Endothelial cell of umbilical vein (primary cell): ENCODE measurements at regions of chr5 and their contacts with region 1.

Region 1: DNA sequence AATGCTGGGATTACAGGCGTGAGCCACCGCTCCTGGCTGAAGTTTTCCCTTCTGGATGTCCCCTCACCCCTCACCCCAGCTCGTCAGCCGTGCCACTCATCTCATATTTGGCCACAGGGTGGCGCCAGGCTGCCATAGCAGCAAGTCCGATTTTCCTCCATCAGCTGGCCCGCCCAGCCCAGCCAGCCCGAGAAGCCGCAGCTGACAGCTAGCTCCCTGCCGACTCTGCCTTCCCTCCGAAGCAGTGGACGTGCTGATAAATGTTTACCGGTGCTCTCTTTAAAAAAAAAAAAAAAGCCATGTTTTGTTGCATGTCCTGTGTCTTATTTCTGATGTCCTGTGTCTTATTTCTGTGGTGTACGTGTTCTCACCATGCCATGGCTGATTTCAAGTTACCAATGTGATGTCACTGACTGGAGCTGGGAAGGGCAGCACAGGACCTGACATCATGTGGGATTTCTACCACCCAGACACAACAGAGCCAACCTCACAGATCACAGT is 58.3 kb downstream of the PFDN1 start:
- DNase-seq: peak; percentile 88
- H3K4me3 ChIP-seq: no peak overlapping the region
- H3K27ac ChIP-seq: peak overlapping the region; percentile 57
- H3K4me1 ChIP-seq: peaks cover 41% of the 10 kb centered on the region
- H3K27me3 ChIP-seq: no peaks in the 10 kb centered on the region
- CTCF ChIP-seq: peak; percentile 72 to 86
- POLR2A ChIP-seq: no peak

Region 2: DNA sequence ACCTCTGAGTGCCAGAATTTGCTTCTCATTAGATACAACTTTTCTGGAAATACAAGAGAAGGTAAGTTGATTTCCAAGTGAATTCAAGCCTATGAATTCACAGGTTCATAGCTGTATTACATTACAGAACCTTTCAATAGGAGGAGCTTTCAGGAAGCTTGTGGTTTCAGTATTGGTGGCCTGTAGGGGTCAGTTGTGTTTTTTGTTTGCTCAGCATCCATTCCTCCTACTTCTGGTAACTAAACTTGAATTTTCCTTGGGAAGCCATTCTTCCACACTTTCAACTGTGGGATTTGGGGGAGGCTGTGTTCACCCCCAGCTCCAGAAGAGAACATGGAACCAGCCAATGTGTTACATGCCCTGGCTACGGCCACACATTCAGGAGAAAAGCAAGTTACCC is 75.2 kb before region 1 on chr5:
- CTCF ChIA-PET with region 1: interaction called, 31 read pairs
- POLR2A ChIA-PET with region 1: no interaction called
- dilution Hi-C with region 1: no loop called
- intact Hi-C with region 1: loop called (anchors 2 kb)
- DNase-seq: peak; percentile 12
- H3K4me3 ChIP-seq: no peak overlapping the region
- H3K27ac ChIP-seq: no peak overlapping the region
- H3K4me1 ChIP-seq: peaks cover under 1% of the 10 kb centered on the region
- H3K27me3 ChIP-seq: peaks cover 0 to 1% of the 10 kb centered on the region in 2 experiments
- CTCF ChIP-seq: no peak
- POLR2A ChIP-seq: no peak

Region 3: DNA sequence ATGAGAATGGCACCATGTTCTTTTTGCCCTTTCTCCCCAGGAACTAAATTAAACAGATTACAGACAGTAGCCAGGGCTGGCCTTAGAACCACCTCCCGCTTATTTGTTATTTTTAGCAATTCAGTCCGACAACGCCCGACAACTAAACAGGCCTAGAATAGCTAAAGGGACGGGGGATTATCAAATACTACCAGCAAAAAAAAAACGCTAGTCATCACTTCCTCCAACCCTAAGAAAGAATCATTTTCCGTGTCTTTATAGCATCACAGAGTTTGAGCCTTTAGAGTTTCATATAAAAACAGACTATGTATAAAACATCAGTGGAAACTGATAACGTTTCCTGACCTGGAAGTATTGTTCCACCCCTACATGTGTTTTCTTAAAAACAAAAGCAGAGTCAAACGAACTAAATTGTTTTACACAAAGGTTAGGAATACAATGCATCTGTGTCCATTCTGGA is 23.0 kb after region 1 on chr5:
- CTCF ChIA-PET with region 1: interaction called, 64 read pairs
- POLR2A ChIA-PET with region 1: interaction called, 7 read pairs
- dilution Hi-C with region 1: no loop called
- intact Hi-C with region 1: loop called (anchors 1 kb)
- DNase-seq: peak; percentile 92
- H3K4me3 ChIP-seq: peak overlapping the region in 1 of 3 experiments; percentile 37
- H3K27ac ChIP-seq: peak overlapping the region; percentile 84
- H3K4me1 ChIP-seq: peaks cover 24% of the 10 kb centered on the region
- H3K27me3 ChIP-seq: no peaks in the 10 kb centered on the region
- CTCF ChIP-seq: no peak
- POLR2A ChIP-seq: no peak

Region 4: DNA sequence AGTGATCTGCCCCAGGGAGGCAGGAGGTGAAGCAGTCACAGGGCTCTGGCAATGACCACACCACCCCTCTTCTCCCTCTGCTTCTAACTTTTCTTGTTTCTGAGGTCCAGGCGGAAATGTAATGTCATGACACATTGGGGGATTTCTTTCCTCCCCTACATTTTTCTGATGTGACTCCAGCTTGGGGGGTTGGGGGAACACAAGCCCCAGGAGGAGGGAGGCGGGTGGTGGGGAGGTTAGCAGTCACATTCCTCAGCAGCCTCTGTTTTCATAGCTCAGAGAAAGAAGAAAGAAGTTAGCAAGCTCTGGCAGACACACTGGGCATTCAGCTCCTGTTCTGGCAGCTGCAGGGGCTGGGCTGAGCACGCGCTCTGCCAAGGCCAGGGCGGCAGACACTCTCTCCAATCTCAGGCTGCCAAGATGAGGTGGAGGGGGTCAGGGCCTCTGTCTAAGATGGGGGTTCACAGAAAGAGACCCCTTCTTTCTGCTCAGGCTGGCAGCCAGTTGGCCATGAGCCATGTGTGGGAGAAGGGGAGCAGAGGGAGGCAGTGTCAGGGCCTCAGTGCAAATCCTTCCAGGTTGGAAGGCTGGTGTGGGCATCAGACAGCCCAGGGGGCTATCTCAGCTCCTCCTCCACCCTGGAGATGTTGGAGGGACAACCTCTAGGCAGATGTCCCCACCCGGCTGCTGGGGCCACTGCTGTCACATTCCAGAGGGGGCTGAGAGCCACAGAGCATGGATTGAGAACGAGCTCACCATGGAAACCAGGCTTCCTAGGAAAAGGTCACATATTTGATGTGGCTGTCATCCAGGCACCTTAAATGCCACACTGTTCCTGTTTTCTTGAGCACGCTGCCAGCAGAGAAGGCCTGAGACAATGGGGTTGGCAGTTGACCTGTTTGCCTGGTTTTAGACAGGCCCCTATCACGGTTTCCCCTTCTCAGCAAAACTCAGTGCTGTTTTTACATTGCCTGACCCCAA is 78.5 kb after region 1 on chr5:
- CTCF ChIA-PET with region 1: interaction called, 22 read pairs
- POLR2A ChIA-PET with region 1: interaction called, 3 read pairs
- dilution Hi-C with region 1: no loop called
- intact Hi-C with region 1: loop called (anchors 1 kb)
- DNase-seq: peak; percentile 94
- H3K4me3 ChIP-seq: no peak overlapping the region
- H3K27ac ChIP-seq: peak overlapping the region; percentile 99
- H3K4me1 ChIP-seq: peaks cover 55% of the 10 kb centered on the region
- H3K27me3 ChIP-seq: no peaks in the 10 kb centered on the region
- CTCF ChIP-seq: no peak
- POLR2A ChIP-seq: no peak

Region 5: GRCh38 chr5:140351609-140352334 is 107.2 kb after region 1 on chr5:
- CTCF ChIA-PET with region 1: interaction called, 1,214 read pairs
- POLR2A ChIA-PET with region 1: interaction called, 112 read pairs
- dilution Hi-C with region 1: no loop called
- intact Hi-C with region 1: loop called (anchors 1 kb)
- DNase-seq: peak; percentile 79
- H3K4me3 ChIP-seq: no peak overlapping the region
- H3K27ac ChIP-seq: no peak overlapping the region
- H3K4me1 ChIP-seq: peaks cover 16% of the 10 kb centered on the region
- H3K27me3 ChIP-seq: no peaks in the 10 kb centered on the region
- CTCF ChIP-seq: peak; percentile 70 to 71
- POLR2A ChIP-seq: no peak

Region 6: GRCh38 chr5:140547508-140548299 is 303.1 kb after region 1 on chr5 and contains the start of gene EIF4EBP3:
- CTCF ChIA-PET with region 1: no interaction called
- POLR2A ChIA-PET with region 1: interaction called, 3 read pairs
- dilution Hi-C with region 1: no loop called
- intact Hi-C with region 1: loop called (anchors 2 kb)
- DNase-seq: peak; percentile 98
- H3K4me3 ChIP-seq: peak within 1 kb of the TSS in 1 of 3 experiments; percentile 20
- H3K27ac ChIP-seq: no peak within 1 kb of the TSS
- H3K4me1 ChIP-seq: peaks cover 24% of the 10 kb centered on the region
- H3K27me3 ChIP-seq: no peaks in the 10 kb centered on the region
- CTCF ChIP-seq: peak; percentile 45 to 69
- POLR2A ChIP-seq: no peak
- total RNA-seq, gene EIF4EBP3: 7.6 and 8.8 TPM in 2 replicates

Region 7: DNA sequence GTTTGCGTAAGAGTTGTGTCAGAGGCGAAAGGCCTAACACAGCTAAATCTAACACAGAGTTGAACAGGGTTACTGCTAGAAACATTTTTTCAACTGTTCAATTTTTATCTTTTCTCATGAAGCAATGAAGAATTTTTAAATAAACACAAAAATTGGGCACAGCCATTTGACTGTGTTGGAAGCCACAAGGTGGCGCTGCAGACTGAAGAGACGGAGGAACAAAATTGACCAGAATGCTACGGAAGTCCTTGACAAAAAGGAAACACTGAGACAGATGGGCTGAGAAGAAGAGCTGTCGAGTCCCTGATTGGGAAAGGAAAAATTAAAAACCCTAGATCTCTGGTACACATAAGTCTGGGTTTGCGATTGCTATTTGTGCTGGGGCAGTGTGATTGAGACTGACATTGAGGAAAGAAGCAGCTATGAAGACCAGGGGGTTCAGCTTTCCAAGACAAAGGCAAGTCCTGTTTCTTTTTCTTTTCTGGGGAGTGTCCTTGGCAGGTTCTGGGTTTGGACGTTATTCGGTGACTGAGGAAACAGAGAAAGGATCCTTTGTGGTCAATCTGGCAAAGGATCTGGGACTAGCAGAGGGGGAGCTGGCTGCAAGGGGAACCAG is 942.4 kb after region 1 on chr5 and contains the start of gene PCDHB9:
- CTCF ChIA-PET with region 1: no interaction called
- POLR2A ChIA-PET with region 1: no interaction called
- dilution Hi-C with region 1: no loop called
- intact Hi-C with region 1: no loop called
- DNase-seq: peak; percentile 3
- H3K4me3 ChIP-seq: no peak within 1 kb of the TSS
- H3K27ac ChIP-seq: no peak within 1 kb of the TSS
- H3K4me1 ChIP-seq: no peaks in the 10 kb centered on the region
- H3K27me3 ChIP-seq: no peaks in the 10 kb centered on the region
- CTCF ChIP-seq: peak; percentile 23 to 50
- POLR2A ChIP-seq: no peak
- total RNA-seq, gene PCDHB9: 0.16 and 0.20 TPM in 2 replicates